ENCODE measurements at regions of chr5 and their contacts with region 1.

Region 1: DNA sequence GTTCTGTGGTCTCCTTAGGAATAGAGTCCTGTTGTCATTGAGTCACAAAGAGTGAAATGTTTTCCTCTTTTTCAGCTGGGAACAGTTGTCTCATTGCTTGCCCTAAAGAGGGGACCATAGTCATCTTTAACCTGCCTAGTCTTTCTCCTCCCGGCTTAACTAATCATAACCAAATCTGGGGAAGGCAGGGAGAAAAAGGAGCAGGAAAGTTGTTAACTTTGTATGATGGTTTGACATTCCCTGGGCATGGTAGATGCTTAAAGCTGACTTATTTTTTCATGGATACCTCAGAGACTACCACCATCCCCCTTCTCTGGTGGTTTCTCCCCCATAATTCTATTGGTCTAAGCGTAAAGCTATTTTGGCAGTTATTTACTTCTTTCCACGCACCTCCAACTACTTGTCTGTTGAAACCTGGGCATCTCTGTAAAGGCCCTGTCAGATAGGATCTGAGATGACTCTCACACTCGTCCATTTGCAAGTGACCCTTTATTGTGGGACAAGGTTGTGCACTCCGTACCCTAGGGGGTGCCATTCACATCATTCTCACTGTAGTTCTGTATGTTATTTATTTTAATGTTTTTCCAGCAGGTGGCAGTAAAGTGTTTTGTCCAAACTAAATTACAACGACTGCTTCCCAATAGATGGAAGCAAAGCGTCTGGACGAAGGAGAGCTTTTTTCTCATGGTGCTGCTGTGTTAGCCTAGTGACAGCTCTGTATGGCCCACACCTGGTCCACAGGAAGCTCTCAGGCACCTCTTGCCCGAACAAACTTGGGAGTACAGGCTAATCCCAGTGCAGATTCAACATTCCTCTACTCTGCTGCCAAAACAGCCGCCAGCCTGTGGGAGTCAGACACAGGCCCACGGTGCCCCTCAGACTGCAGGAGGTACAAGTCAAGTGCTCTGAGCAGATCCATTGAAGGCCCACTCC is 3.0 kb upstream of the FAM13B start:
- DNase-seq: no peak
- ATAC-seq: peak; percentile 44
- H3K4me3 Mint-ChIP-seq: peak overlapping the region; percentile 48
- H3K27ac Mint-ChIP-seq: peak overlapping the region; percentile 21
- H3K4me1 Mint-ChIP-seq: peaks cover 34% of the 10 kb centered on the region
- H3K27me3 Mint-ChIP-seq: no peaks in the 10 kb centered on the region
- CTCF ChIP-seq: peak; percentile 72

Region 2: GRCh38 chr5:138018844-138019243 is 17.0 kb before region 1 on chr5:
- CTCF ChIA-PET with region 1: interaction called, 4 read pairs
- POLR2A ChIA-PET with region 1: no interaction called
- intact Hi-C with region 1: loop called (anchors 2 kb)
- DNase-seq: no peak
- ATAC-seq: no peak
- H3K4me3 Mint-ChIP-seq: no peak overlapping the region
- H3K27ac Mint-ChIP-seq: no peak overlapping the region
- H3K4me1 Mint-ChIP-seq: peaks cover 32% of the 10 kb centered on the region
- H3K27me3 Mint-ChIP-seq: no peaks in the 10 kb centered on the region
- CTCF ChIP-seq: no peak

Region 3: GRCh38 chr5:138065102-138065501 is 29.2 kb after region 1 on chr5:
- CTCF ChIA-PET with region 1: interaction called, 144 read pairs
- POLR2A ChIA-PET with region 1: interaction called, 6 read pairs
- intact Hi-C with region 1: loop called (anchors 1 kb)
- DNase-seq: no peak
- ATAC-seq: no peak
- H3K4me3 Mint-ChIP-seq: no peak overlapping the region
- H3K27ac Mint-ChIP-seq: no peak overlapping the region
- H3K4me1 Mint-ChIP-seq: peaks cover 5% of the 10 kb centered on the region
- H3K27me3 Mint-ChIP-seq: no peaks in the 10 kb centered on the region
- CTCF ChIP-seq: no peak

Region 4: DNA sequence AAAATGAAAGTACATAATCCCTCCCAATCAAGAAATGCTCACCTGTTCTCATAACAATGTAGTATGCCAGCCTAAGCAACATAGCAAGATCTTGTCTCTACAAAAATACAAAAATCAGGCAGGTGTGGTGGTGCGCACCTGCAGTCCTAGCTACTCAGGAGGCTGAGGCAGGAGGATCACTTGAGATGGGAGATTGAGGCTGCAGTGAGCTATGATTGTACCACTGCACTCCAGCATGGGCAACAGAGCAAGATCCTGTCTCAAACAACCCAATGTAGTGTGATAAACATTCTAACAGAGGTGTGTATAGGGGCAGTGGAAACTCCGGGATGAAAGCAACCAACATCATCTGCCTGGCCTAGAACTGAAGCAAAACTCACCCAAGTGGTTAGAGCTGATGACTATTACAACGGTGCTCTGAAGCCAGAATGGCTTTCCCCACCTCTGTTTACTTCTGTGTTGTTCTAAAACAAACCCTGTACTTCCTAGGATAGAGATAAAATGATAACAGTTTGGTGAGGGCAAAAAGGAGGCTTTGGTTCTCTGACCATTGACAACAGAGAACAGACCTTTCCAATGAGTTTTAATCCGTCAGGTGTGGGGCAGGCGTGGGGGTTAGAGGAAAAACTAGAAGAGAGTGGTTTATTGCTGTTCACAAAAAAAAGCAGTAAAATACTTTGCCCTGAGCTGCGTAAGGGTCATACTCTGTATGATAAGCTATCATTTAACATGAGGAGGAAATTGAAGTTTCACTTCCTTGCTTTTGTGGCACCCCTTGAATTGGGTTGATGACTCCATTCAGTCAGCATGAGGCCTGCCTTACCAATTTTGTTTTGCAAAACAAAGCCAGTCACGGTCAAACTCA is 66.8 kb after region 1 on chr5:
- CTCF ChIA-PET with region 1: no interaction called
- POLR2A ChIA-PET with region 1: interaction called, 10 read pairs
- intact Hi-C with region 1: loop called (anchors 2 kb)
- DNase-seq: no peak
- ATAC-seq: peak; percentile 95
- H3K4me3 Mint-ChIP-seq: peak overlapping the region; percentile 6
- H3K27ac Mint-ChIP-seq: peak overlapping the region; percentile 43
- H3K4me1 Mint-ChIP-seq: peaks cover 23% of the 10 kb centered on the region
- H3K27me3 Mint-ChIP-seq: peaks cover 5% of the 10 kb centered on the region
- CTCF ChIP-seq: no peak

Region 5: GRCh38 chr5:138128334-138128733 is 92.5 kb after region 1 on chr5:
- CTCF ChIA-PET with region 1: interaction called, 12 read pairs
- POLR2A ChIA-PET with region 1: no interaction called
- intact Hi-C with region 1: loop called (anchors 1 kb)
- DNase-seq: no peak
- ATAC-seq: no peak
- H3K4me3 Mint-ChIP-seq: no peak overlapping the region
- H3K27ac Mint-ChIP-seq: no peak overlapping the region
- H3K4me1 Mint-ChIP-seq: peaks cover 3% of the 10 kb centered on the region
- H3K27me3 Mint-ChIP-seq: peaks cover 3% of the 10 kb centered on the region
- CTCF ChIP-seq: no peak

Region 6: GRCh38 chr5:138337685-138338410 is 302.0 kb after region 1 on chr5 and contains the start of gene FAM53C:
- CTCF ChIA-PET with region 1: no interaction called
- POLR2A ChIA-PET with region 1: interaction called, 3 read pairs
- intact Hi-C with region 1: loop called (anchors 2 kb)
- DNase-seq: peak; percentile 97
- ATAC-seq: peak; percentile 81
- H3K4me3 Mint-ChIP-seq: peak within 1 kb of the TSS; percentile 90
- H3K27ac Mint-ChIP-seq: peak within 1 kb of the TSS; percentile 100
- H3K4me1 Mint-ChIP-seq: peaks cover 37% of the 10 kb centered on the region
- H3K27me3 Mint-ChIP-seq: no peaks in the 10 kb centered on the region
- CTCF ChIP-seq: no peak
- total RNA-seq, gene FAM53C: 23.5 and 24.9 TPM in 2 replicates